ENCODE measurements at regions of chr15 and their contacts with region 1.

Region 1: DNA sequence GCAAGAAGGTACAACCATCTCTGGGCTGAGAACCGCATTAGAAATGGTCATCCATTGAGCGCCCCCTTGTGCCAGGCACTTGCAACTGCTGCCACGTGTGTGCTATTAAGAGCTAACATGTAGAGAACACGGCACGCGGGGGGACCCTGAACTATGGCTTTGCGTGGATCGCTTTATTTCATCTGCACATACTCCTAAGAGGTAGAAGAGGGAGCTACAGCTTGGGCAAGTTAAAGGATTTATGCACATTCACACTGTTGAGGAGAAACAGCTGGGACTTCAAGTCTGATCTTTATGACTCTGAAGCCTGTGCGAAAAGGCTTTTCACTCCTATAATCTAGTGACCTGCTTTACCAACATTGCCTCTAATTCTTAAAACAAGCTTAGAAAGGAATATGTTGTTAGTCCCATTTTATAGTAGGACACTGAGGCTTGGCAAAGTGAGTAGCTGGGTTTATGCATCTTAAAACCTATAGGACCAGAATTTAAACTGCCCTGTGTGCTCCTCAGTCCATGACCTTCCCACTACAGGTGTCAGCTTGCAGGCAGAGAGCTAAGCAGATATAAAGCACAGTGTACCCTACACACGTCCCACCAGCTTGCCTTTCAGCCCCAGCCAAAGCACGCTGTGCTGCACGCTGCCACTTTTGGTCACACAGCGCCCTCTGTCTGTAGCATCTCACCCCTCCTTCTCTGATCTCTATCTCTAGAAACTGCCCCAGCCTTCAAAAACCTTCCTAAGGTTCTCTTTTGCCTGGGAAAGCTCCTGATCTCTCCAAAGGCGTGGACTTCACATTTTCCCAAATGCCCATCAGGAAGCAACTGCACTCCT is 57.8 kb downstream of the STARD5 start:
- H3K4me3 Mint-ChIP-seq: no peak overlapping the region
- H3K27ac Mint-ChIP-seq: no peak overlapping the region
- H3K4me1 Mint-ChIP-seq: peaks cover 31% of the 10 kb centered on the region
- H3K27me3 Mint-ChIP-seq: peaks cover 25% of the 10 kb centered on the region

Region 2: DNA sequence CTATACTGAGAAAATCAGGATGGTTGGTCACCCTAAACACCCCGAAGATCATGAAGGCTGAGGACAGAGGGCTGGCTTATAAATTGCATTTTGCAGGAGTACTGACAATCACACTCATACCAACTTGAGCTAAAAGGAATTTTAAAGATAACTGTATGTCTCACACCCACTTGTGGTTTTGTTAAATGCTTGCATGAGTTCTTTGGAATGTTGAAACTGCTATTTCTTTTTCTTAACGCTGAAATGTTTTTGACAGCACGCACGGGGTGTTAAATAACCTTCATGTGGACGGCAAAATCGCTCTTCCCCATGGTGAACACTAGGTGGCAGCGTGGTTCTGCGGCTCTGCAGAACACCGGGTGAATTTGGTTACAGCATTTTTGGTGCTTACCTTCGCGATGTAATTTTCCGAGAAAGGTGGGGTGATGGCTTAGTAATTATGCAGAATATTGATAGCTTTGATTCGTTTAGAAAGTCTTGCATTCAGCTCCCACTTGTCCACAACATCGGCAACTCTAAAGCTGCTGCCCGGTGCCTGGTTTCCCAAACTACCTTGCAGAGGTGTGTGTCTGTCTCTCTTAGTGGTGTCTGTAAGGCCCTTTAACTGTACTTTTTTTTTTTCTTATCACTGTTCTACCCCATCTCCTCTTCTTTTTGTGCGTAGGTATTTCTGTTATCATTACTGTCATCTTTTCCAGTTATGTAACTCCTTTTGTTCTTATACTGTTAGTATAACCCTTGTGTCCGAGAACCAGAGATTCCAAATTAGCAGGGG is 810.3 kb before region 1 on chr15:
- intact Hi-C with region 1: loop called (anchors 10 kb)
- H3K4me3 Mint-ChIP-seq: no peak overlapping the region
- H3K27ac Mint-ChIP-seq: no peak overlapping the region
- H3K4me1 Mint-ChIP-seq: peaks cover 17% of the 10 kb centered on the region
- H3K27me3 Mint-ChIP-seq: peaks cover 94% of the 10 kb centered on the region

Region 3: GRCh38 chr15:80977627-80978036 is 288.5 kb before region 1 on chr15:
- intact Hi-C with region 1: loop called (anchors 1 kb)
- H3K4me3 Mint-ChIP-seq: no peak overlapping the region
- H3K27ac Mint-ChIP-seq: peak overlapping the region; percentile 68
- H3K4me1 Mint-ChIP-seq: peaks cover 36% of the 10 kb centered on the region
- H3K27me3 Mint-ChIP-seq: no peaks in the 10 kb centered on the region

Region 4: GRCh38 chr15:81000624-81001151 is 265.5 kb before region 1 on chr15 and contains the start of gene TLNRD1:
- intact Hi-C with region 1: loop called (anchors 5 kb)
- H3K4me3 Mint-ChIP-seq: peak within 1 kb of the TSS; percentile 83
- H3K27ac Mint-ChIP-seq: peak within 1 kb of the TSS; percentile 95
- H3K4me1 Mint-ChIP-seq: peaks cover 40% of the 10 kb centered on the region
- H3K27me3 Mint-ChIP-seq: no peaks in the 10 kb centered on the region

Region 5: DNA sequence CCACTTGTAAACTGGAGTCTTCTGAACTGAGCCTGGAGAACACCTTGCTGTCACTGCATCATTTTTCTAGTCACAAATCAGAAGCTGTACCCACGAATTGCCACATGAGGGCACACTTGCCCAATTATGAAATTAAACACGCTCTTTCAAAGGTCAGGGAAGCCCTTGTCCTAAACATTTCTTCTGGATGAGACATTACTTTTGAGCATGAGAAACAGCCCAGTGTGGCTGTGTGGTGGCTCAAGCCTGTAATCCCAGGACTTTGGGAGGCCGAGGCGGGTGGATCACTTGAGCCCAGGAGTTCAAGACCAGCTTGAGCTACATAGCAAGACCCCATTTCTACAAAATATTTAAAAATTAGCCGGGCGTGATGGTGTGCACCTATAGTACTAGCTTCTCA is 159.6 kb before region 1 on chr15:
- intact Hi-C with region 1: loop called (anchors 1 kb)
- H3K4me3 Mint-ChIP-seq: no peak overlapping the region
- H3K27ac Mint-ChIP-seq: no peak overlapping the region
- H3K4me1 Mint-ChIP-seq: peaks cover 19% of the 10 kb centered on the region
- H3K27me3 Mint-ChIP-seq: peaks cover 42% of the 10 kb centered on the region

Region 6: GRCh38 chr15:81155375-81156218 is 110.6 kb before region 1 on chr15:
- intact Hi-C with region 1: loop called (anchors 1 kb)
- H3K4me3 Mint-ChIP-seq: no peak overlapping the region
- H3K27ac Mint-ChIP-seq: no peak overlapping the region
- H3K4me1 Mint-ChIP-seq: no peaks in the 10 kb centered on the region
- H3K27me3 Mint-ChIP-seq: peaks cover 6% of the 10 kb centered on the region

Region 7: DNA sequence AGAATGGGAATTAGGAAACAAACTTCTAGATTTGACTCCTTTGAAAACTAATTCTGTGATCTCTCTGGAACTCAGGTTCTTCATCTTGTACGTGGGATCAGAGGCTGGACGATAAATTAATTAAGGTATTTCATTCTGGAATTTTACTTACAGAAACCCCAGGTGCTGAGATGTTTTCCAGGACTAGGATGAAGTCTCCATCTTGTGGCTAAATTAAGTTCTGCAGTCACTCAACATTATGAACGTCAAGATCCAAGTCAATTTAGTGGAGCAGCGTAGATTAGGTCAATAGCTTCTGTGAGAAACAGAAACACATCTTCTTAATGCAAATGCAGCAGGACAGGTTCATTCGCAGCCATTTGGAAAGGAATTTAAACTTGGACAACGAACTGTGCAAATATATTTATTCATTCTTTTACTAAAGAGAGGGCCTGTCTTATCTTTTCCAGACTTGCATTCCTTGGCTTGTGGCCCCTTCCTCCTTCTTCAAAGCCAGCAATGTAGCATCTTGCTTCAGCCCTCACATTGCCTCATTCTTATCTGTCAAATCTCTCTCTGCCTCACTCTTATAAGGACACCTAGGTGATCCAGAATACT is 134.6 kb after region 1 on chr15:
- intact Hi-C with region 1: loop called (anchors 1 kb)
- H3K4me3 Mint-ChIP-seq: no peak overlapping the region
- H3K27ac Mint-ChIP-seq: no peak overlapping the region
- H3K4me1 Mint-ChIP-seq: no peaks in the 10 kb centered on the region
- H3K27me3 Mint-ChIP-seq: peaks cover 1% of the 10 kb centered on the region

Region 8: GRCh38 chr15:82081914-82082762 is 816.0 kb after region 1 on chr15:
- intact Hi-C with region 1: no loop called
- H3K4me3 Mint-ChIP-seq: no peak overlapping the region
- H3K27ac Mint-ChIP-seq: no peak overlapping the region
- H3K4me1 Mint-ChIP-seq: no peaks in the 10 kb centered on the region
- H3K27me3 Mint-ChIP-seq: no peaks in the 10 kb centered on the region